ENCODE measurements at regions of chr5 and their contacts with region 1.

Region 1: GRCh38 chr5:115841382-115842088 is at the starts of genes AP3S1 and ATG12:
- DNase-seq: peak; percentile 86 to 97 (median 90)
- ATAC-seq: peak; percentile 86 to 91
- H3K4me3 Mint-ChIP-seq: peak within 1 kb of the TSS; percentile 96 to 100 (median 98)
- H3K27ac Mint-ChIP-seq: peak within 1 kb of the TSS; percentile 98 to 100 (median 100)
- H3K4me1 Mint-ChIP-seq: peaks cover 18 to 74% (median 52%) of the 10 kb centered on the region in 4 donors
- H3K27me3 Mint-ChIP-seq: no peaks in the 10 kb centered on the region
- polyA plus RNA-seq, gene AP3S1: 52.1 to 63.4 (median 55.7) TPM
- polyA plus RNA-seq, gene ATG12: 90.6 to 126 (median 123) TPM

Region 2: DNA sequence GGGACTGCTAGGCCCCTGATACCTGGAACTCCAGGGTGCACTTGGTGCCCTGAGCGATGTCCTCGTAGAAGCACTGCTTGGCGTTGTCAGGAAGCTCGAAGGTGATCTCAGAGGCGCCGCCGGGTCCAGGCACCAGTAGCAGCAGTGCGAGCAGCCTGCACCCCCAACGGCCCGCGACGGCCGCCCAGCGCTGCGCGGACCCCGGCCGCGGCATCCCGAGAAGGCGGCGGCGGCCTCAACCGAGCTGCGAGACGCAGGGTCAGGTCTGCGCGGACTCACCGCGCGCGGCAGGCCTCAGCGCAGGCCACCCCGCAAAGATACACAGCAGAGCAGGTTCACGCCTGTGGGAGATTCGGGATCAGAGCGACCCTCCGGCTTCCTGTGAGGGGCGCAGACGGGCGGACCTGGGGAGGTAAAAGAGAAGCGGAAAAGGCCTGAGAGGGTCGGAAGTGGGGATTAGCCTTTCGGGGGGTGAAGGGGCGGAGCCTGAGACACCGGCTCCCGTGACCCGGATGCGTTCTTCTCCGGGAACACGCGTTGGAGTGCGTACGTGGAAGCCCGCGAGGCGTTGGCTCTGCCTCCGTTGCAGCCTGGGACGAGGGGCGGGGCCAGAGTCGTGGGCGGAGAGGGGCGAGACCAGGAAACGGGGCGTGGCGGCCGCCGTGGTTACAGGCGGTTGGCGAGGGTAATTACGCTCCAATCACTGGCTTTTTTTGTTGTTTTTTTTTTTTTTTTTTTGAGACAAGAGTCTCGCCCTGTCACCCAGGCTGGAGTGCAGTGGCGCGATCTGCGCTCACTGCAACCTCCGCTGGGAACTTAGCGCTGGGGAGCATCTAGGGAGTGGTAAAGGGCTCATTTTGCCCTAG is 215.7 kb before region 1 on chr5 and contains the start of gene TMED7:
- POLR2A ChIA-PET with region 1: interaction called, 11 read pairs
- DNase-seq: peak; percentile 94 to 100 (median 99)
- ATAC-seq: peak; percentile 89 to 90
- H3K4me3 Mint-ChIP-seq: peak within 1 kb of the TSS in 1 of 10 donors; percentile 95
- H3K27ac Mint-ChIP-seq: peak within 1 kb of the TSS in 3 of 10 donors; percentile 94 to 98 (median 97)
- H3K4me1 Mint-ChIP-seq: peaks cover 16 to 32% (median 27%) of the 10 kb centered on the region in 4 donors
- H3K27me3 Mint-ChIP-seq: no peaks in the 10 kb centered on the region
- polyA plus RNA-seq, gene TMED7: 30.3 to 43.2 (median 37.2) TPM

Region 3: DNA sequence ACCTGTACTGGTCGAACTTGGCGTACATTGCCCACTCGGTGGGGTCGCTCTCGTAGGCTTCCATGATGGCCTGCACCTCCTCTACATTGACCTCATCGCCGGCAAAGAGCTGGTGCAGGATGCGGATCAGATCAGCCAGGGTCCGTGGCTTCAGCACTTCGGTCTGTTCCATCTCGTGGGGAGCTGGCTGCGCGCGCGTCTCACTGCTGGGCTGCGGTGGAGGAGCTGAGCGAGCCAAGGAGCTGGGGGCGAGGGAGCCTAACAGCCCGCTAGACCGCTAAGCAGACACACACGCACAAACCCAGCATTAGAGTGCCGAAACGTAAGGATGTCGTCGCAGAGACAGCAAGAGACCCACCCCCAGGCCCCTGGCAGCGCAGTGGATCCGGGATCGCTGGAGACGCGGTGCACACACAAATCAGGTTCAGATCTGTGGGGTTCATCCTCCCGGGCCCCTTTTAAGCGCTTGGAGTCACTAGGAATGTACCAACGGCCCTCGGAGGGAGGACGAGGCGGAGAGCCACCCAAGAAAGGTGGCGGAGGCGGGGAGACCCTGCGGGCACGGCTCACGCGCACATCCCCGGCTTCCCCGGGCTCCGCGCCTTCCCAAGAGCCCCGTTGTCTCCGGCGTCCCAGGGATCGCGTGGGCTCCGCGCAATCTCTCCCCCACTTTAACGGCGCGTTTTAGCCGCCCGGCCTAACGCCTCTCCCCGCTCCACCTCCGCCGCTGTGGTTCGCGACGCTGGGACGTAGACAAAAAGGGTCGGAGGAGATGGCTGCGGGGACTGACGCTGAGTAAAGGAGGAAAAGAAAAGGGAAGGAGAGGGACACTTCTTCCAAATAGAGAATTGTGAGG is 25.1 kb before region 1 on chr5 and contains the start of gene CDO1:
- POLR2A ChIA-PET with region 1: no interaction called
- DNase-seq: peak in 3 of 10 donors; percentile 13 to 59 (median 14)
- ATAC-seq: peak; percentile 66 to 68
- H3K4me3 Mint-ChIP-seq: peak within 1 kb of the TSS; percentile 63 to 78 (median 69)
- H3K27ac Mint-ChIP-seq: no peak within 1 kb of the TSS
- H3K4me1 Mint-ChIP-seq: peaks cover 8 to 19% (median 17%) of the 10 kb centered on the region in 4 donors
- H3K27me3 Mint-ChIP-seq: peaks cover 52 to 100% (median 70%) of the 10 kb centered on the region in 5 donors
- polyA plus RNA-seq, gene CDO1: not detected

Region 4: DNA sequence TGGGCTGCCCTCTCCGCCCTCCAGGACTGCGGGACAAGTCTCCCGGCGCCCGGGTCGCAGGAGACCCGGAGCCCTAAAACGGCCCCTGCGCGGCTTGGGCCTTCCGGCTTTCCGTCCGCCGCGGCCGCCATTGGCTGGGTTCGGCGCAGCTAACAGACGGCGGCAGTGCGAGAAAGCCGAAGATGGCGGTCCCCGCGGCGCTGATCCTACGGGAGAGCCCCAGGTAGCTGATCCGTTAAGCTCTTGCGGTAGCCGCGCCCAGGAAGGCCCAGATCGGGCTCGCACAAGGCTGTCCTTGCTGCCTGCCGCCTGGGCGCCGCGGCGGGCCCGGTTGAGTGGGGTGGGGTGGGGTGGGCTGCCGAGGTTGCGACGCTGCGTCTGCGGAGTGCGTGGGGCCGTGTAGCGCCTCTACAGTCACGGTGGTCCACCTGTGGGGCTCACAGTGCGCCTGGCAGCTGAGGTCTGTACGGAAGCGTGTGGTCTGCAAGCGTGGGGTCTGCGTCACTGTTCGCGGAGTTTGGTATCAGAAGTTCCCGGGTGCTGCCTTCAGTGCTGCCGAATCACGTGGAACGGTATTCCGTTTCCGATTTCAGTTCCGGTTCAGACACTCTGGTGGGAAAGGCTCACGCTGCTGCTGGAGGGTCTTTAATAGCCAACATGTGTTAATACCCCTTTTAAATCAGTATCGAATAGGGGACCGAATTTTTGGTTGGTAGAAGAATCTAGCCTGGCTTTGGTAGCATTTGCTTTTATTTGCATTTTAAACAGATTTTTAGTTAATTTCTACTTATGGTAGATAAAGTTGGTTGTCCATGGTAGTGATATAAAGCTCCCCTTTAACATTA is 243.6 kb after region 1 on chr5 and contains the start of gene COMMD10:
- POLR2A ChIA-PET with region 1: interaction called, 22 read pairs
- DNase-seq: peak; percentile 71 to 93 (median 90)
- ATAC-seq: peak; percentile 95
- H3K4me3 Mint-ChIP-seq: peak within 1 kb of the TSS; percentile 87 to 98 (median 94)
- H3K27ac Mint-ChIP-seq: peak within 1 kb of the TSS; percentile 93 to 99 (median 98)
- H3K4me1 Mint-ChIP-seq: peaks cover 24 to 55% (median 53%) of the 10 kb centered on the region in 4 donors
- H3K27me3 Mint-ChIP-seq: peaks cover 0 to 2% (median 0%) of the 10 kb centered on the region in 5 donors
- polyA plus RNA-seq, gene COMMD10: 31.7 to 35.3 (median 32.5) TPM